Ovary (tissue), 10 donors: ENCODE measurements at regions of chr10 and their contacts with region 1.

Region 1: DNA sequence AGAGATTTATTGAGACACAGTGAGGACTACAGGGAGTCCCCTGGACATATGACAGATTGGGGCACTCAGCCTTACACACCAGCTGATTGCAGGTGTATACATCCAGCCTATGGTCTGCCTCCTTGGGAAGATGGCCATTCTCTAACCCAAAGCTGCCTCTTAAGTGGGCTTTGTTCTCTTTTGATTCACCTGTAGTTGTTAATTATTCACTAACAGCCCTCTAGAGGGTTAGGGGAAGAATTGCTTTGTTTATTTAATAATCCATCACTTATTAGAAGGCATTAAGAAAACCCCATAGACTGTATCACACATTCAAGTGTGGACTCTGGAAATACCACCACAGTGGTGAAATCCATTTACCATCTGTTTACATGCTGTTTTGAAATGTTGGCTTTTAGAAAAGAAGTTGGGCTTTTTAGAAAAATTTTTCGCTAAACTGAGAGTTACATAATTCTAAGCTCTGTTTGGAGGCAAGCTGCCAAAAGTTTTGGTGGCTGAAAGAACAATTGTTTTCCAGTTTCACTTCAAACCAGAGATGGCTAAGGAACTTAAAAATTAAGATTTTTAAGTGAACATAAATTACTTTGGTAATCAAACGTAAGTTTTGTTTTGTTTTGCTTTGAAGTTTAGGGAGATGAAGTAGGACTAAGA is 379.1 kb downstream of the ADRA2A start:
- DNase-seq: no peak
- H3K4me3 ChIP-seq: no peak overlapping the region
- H3K27ac ChIP-seq: no peak overlapping the region
- H3K4me1 ChIP-seq: no peaks in the 10 kb centered on the region
- H3K27me3 ChIP-seq: no peaks in the 10 kb centered on the region
- CTCF ChIP-seq: no peak
- EP300 ChIP-seq: no peak
- POLR2A ChIP-seq: no peak

Region 2: GRCh38 chr10:111410740-111411139 is 45.2 kb before region 1 on chr10:
- intact Hi-C with region 1: no loop called
- DNase-seq: no peak
- H3K4me3 ChIP-seq: no peak overlapping the region
- H3K27ac ChIP-seq: no peak overlapping the region
- H3K4me1 ChIP-seq: no peaks in the 10 kb centered on the region
- H3K27me3 ChIP-seq: no peaks in the 10 kb centered on the region
- CTCF ChIP-seq: no peak
- EP300 ChIP-seq: no peak
- POLR2A ChIP-seq: no peak

Region 3: DNA sequence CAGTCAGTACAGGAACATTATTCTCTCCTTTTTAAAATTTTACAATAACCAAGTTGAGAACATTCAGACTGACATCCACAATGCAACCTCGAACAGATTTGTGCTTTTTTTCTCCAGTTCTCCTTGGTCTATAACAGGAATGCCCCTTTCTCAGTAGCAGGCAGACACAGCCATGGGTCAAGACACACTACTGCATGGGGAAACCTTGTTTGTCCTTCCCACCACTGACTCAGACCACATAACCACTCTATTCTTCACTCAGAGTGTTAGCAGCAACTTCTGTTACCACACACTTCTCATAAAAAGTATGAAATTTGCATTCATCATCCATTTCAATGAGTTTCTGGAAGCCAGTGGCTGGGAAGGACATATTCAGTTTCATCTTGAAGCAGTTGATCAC is 42.7 kb after region 1 on chr10:
- intact Hi-C with region 1: loop called in 1 of 4 experiments (anchors 2 kb)
- DNase-seq: no peak
- H3K4me3 ChIP-seq: no peak overlapping the region
- H3K27ac ChIP-seq: no peak overlapping the region
- H3K4me1 ChIP-seq: no peaks in the 10 kb centered on the region
- H3K27me3 ChIP-seq: no peaks in the 10 kb centered on the region
- CTCF ChIP-seq: no peak
- EP300 ChIP-seq: no peak
- POLR2A ChIP-seq: no peak

Region 4: DNA sequence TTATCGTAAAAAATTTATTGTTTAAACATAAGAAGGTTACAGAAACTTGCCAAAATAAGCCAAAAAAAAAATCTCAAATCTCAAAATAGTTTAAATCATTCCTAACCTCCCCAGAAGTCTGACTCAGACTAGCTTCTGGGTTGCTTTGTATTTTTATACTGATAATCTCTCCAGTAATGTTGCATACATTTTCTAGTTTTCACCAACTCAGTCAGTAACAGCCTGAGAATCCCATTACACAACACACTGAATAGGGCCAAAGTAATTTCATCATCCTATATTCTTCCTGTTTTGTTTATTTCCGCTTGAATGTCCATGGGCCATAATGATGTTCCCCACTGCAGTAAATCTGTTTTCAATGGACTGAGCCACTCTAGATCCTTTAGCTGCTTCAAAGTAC is 249.1 kb after region 1 on chr10:
- intact Hi-C with region 1: no loop called
- DNase-seq: no peak
- H3K4me3 ChIP-seq: no peak overlapping the region
- H3K27ac ChIP-seq: no peak overlapping the region
- H3K4me1 ChIP-seq: no peaks in the 10 kb centered on the region
- H3K27me3 ChIP-seq: no peaks in the 10 kb centered on the region
- CTCF ChIP-seq: no peak
- EP300 ChIP-seq: no peak
- POLR2A ChIP-seq: no peak